ENCODE measurements at regions of chr12 and their contacts with region 1.

Region 1: DNA sequence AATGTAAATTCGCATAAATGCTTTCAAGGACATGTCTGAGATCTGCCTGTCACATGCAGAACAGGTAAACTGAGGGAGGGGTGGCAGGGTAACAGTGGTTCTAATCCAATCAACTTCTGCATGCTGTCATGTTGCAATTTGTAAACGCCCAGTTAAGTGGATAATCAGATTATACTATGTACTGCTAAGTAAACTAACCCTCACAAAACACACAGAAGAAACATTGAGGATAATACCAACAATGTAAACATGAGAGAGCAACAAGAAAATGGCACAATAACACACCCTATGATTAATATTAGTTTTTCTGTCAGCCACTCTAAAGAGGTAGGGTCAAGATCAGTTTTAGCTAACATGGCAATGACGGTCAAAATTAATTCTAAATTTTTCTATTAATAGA is 123.7 kb downstream of the KIF21A start:
- DNase-seq: no peak
- ATAC-seq: peak; percentile 64
- H3K4me3 ChIP-seq: no peak overlapping the region
- H3K27ac ChIP-seq: no peak overlapping the region
- H3K4me1 ChIP-seq: no peaks in the 10 kb centered on the region
- H3K27me3 ChIP-seq: no peaks in the 10 kb centered on the region
- CTCF ChIP-seq: no peak

Region 2: GRCh38 chr12:39230086-39230485 is 89.1 kb before region 1 on chr12:
- CTCF ChIA-PET with region 1: no interaction called
- POLR2A ChIA-PET with region 1: no interaction called
- intact Hi-C with region 1: no loop called
- DNase-seq: peak; percentile 87
- ATAC-seq: peak; percentile 91
- H3K4me3 ChIP-seq: no peak overlapping the region
- H3K27ac ChIP-seq: peak overlapping the region; percentile 36
- H3K4me1 ChIP-seq: peaks cover 11% of the 10 kb centered on the region
- H3K27me3 ChIP-seq: no peaks in the 10 kb centered on the region
- CTCF ChIP-seq: no peak

Region 3: GRCh38 chr12:39378341-39378740 is 59.2 kb after region 1 on chr12:
- CTCF ChIA-PET with region 1: no interaction called
- POLR2A ChIA-PET with region 1: no interaction called
- intact Hi-C with region 1: loop called (anchors 1 kb)
- DNase-seq: no peak
- ATAC-seq: no peak
- H3K4me3 ChIP-seq: no peak overlapping the region
- H3K27ac ChIP-seq: no peak overlapping the region
- H3K4me1 ChIP-seq: peaks cover 11% of the 10 kb centered on the region
- H3K27me3 ChIP-seq: no peaks in the 10 kb centered on the region
- CTCF ChIP-seq: no peak

Region 4: GRCh38 chr12:39503445-39503844 is 184.3 kb after region 1 on chr12:
- CTCF ChIA-PET with region 1: no interaction called
- POLR2A ChIA-PET with region 1: no interaction called
- intact Hi-C with region 1: loop called (anchors 10 kb)
- DNase-seq: peak; percentile 84
- ATAC-seq: peak; percentile 77
- H3K4me3 ChIP-seq: no peak overlapping the region
- H3K27ac ChIP-seq: no peak overlapping the region
- H3K4me1 ChIP-seq: peaks cover 32% of the 10 kb centered on the region
- H3K27me3 ChIP-seq: no peaks in the 10 kb centered on the region
- CTCF ChIP-seq: peak; percentile 66

Region 5: DNA sequence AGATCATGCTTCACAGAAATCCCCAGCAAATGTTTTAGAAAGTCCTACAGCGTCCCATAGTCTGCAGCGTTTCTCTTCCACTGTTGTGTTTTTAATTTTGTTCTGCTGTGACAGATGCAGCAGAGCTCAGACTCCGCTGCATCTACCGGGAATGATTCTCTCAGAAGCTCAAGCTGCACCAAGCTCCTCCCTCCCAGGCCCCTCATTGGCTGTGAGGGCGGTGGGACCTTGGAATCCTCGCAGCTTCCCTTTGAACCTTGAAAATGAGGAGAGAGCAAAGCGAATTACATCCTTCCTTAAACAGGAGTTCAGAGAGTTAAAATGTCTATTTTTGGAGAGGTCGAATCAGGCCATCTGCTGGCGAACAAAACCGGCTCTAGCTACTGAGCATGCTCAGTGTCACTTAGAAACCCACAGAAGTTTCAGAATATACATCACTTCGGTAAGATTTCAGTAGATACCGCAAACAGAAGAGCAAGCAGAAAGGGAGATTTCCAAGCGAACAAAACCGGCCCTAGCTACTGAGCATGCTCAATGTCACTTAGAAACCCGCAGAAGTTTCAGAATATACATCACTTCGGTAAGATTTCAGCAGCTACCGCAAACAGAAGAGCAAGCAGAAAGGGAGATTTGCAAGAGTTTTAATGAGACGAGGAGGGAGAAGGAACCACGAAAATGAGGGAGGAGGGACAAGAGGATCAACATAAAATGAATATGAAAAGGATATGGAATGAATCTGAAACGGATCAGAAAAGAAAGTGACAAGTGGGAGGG is 300.7 kb after region 1 on chr12 and contains the start of gene ABCD2:
- CTCF ChIA-PET with region 1: no interaction called
- POLR2A ChIA-PET with region 1: no interaction called
- intact Hi-C with region 1: loop called (anchors 2 kb)
- DNase-seq: peak; percentile 65
- ATAC-seq: peak; percentile 94
- H3K4me3 ChIP-seq: peak within 1 kb of the TSS; percentile 79
- H3K27ac ChIP-seq: no peak within 1 kb of the TSS
- H3K4me1 ChIP-seq: peaks cover 5% of the 10 kb centered on the region; the same call in 1 of the 2 replicates
- H3K27me3 ChIP-seq: no peaks in the 10 kb centered on the region
- CTCF ChIP-seq: peak; percentile 40; the same call in 1 of the 2 replicates
- total RNA-seq, gene ABCD2: not detected in 2 replicates

Measured in PC-3 (cell line).